GM12878 (cell line): ENCODE measurements at regions of chr6 and their contacts with region 1.

Region 1: DNA sequence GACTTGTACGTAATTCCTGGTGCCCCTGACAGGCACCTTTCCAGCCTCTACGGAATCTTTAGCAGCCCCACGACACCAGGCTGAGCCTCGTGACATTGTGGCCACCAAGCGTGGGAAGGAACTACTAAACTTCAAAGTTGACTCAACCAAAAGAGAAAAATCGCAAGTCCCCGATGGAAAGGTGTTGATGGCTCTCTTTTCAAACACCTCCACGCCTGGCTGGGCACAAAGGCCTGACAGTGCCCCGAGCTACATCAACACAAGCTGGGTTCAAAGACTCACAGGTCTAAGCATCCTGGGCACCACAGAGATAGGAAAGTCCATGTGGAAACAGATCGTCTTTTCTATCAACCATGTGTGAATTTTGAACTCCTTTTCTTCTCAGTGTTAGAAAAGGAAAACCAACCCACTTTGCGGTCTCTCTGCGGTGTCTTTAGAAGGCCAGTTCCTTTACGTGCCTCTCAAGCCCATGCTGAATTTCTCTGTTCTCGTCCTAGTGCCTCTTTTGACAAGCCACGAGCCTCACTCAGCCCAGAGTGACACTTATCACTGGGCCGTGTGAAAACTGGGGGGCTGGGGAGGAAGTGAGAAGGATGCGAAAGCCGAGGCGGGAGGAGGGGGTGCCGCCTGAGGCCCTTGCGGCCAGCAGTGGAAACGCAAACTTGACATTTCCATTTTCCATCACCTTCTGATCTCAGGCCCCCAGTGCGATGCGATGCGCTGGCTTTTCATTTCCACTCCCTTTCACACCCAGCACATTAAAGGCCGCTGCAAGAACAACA is 59.4 kb downstream of the GFOD1 start:
- DNase-seq: peak; percentile 98
- ATAC-seq: peak; percentile 73
- H3K4me3 ChIP-seq: peak overlapping the region; percentile 22; the same call in 1 of the 2 replicates
- H3K27ac ChIP-seq: peak overlapping the region; percentile 99
- H3K4me1 ChIP-seq: peaks cover 76% of the 10 kb centered on the region
- H3K27me3 ChIP-seq: no peaks in the 10 kb centered on the region
- CTCF ChIP-seq: peak; percentile 38 to 68 (median 41); a peak in 5 of 6 replicates
- EP300 ChIP-seq: peak; percentile 79 to 91
- POLR2A ChIP-seq: peak; percentile 60
- RAD21 ChIP-seq: peak; percentile 57

Region 2: GRCh38 chr6:13336553-13336952 is 91.4 kb before region 1 on chr6:
- CTCF ChIA-PET with region 1: interaction called, 18 read pairs
- POLR2A ChIA-PET with region 1: interaction called, 3 read pairs
- RAD21 ChIA-PET with region 1: interaction called, 52 read pairs
- SMC1A ChIA-PET with region 1: interaction called, 56 read pairs
- in situ Hi-C with region 1: no loop called
- intact Hi-C with region 1: loop called (anchors 1 kb)
- DNase-seq: no peak
- ATAC-seq: peak; percentile 82
- H3K4me3 ChIP-seq: no peak overlapping the region
- H3K27ac ChIP-seq: no peak overlapping the region
- H3K4me1 ChIP-seq: peaks cover 15% of the 10 kb centered on the region; the same call in 1 of the 2 replicates
- H3K27me3 ChIP-seq: no peaks in the 10 kb centered on the region
- CTCF ChIP-seq: peak; percentile 90 to 95 (median 94); a peak in 5 of 6 replicates
- EP300 ChIP-seq: no peak
- POLR2A ChIP-seq: no peak
- RAD21 ChIP-seq: peak; percentile 98

Region 3: DNA sequence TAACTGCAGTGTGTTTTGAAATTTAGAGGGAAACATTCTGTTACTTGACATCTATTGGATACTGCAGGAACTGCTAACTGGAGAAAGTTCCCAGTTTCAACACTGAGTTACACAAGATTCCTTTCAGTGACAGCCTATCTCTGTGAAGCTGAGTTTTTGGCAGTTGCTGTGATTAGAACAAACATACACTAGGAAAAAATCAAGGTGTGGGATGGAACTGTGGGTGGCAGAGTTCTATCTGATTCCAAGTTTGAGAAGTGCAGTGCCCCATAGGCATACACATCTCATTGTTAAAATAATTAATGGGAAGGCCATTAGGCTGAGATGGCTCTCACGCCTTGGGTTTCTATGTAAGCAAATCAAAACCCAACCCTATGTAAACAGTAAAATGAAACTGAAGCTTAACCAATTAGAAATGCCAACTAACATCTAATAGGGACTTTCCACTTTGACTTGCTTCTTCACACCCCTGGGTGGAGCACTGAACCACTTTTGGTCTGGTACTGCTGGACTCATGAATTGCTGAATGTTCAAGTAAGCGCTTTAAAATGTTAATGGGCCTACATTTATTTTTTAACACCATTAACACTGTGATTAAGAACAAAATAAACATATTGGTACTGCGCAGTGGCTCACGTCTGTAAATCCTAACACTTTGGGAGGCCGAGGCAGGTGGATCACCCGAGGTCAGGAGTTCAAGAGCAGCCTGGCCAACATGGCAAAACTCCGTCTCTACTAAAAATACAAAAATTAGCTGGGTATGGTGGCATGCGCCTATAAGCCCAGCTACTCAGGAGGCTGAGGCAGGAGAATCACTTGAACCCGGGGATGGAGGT is 44.4 kb before region 1 on chr6:
- CTCF ChIA-PET with region 1: interaction called, 113 read pairs
- POLR2A ChIA-PET with region 1: interaction called, 55 read pairs
- RAD21 ChIA-PET with region 1: interaction called, 106 read pairs
- SMC1A ChIA-PET with region 1: interaction called, 241 read pairs
- in situ Hi-C with region 1: loop called (anchors 5 kb)
- intact Hi-C with region 1: loop called (anchors 2 kb)
- DNase-seq: peak; percentile 91
- ATAC-seq: peak; percentile 98
- H3K4me3 ChIP-seq: no peak overlapping the region
- H3K27ac ChIP-seq: peak overlapping the region; percentile 93
- H3K4me1 ChIP-seq: peaks cover 45% of the 10 kb centered on the region
- H3K27me3 ChIP-seq: no peaks in the 10 kb centered on the region
- CTCF ChIP-seq: peak; percentile 40 to 67 (median 48); a peak in 5 of 6 replicates
- EP300 ChIP-seq: peak in 1 of 2 experiments; percentile 54; a peak in 2 of 4 replicates
- POLR2A ChIP-seq: no peak
- RAD21 ChIP-seq: peak; percentile 83

Region 4: DNA sequence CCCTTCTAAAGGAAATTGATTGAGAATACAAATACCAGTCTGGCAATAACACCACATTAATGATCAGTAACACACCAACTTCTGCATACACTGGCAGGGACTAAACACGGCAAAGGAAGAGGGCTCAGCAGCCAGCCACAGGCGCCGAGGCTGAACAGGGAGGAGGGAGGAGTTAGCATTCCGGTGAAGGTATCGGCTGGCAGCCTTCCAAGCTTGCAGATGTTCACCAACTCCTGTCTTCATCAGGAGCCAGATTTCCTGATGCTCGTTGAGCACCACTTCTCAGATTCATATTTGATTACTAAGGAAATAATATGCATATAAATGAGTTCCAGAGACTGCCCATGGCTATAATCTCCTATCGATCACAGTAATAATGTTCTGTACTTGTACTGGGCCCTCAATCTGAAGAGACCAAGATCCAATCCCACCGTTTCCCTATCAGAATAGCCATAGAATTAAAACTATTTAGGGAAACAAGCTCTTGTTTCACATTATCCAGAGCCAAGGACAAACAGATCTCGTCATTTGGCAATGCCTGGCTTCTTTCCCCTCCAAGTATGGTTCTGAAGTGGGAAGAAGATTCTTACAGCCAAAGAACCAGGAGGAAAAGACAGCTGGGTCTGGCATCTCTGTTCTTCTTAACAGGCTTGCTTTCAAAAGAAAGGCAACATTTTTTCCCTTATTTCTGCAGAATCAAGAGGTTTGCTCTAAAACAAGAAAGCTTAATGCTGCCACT is 17.2 kb after region 1 on chr6:
- CTCF ChIA-PET with region 1: interaction called, 10 read pairs
- POLR2A ChIA-PET with region 1: interaction called, 5 read pairs
- RAD21 ChIA-PET with region 1: interaction called, 11 read pairs
- SMC1A ChIA-PET with region 1: interaction called, 56 read pairs
- in situ Hi-C with region 1: no loop called
- intact Hi-C with region 1: no loop called
- DNase-seq: no peak
- ATAC-seq: peak; percentile 76
- H3K4me3 ChIP-seq: no peak overlapping the region
- H3K27ac ChIP-seq: no peak overlapping the region
- H3K4me1 ChIP-seq: peaks cover 14% of the 10 kb centered on the region
- H3K27me3 ChIP-seq: no peaks in the 10 kb centered on the region
- CTCF ChIP-seq: no peak
- EP300 ChIP-seq: no peak
- POLR2A ChIP-seq: no peak
- RAD21 ChIP-seq: no peak

Region 5: DNA sequence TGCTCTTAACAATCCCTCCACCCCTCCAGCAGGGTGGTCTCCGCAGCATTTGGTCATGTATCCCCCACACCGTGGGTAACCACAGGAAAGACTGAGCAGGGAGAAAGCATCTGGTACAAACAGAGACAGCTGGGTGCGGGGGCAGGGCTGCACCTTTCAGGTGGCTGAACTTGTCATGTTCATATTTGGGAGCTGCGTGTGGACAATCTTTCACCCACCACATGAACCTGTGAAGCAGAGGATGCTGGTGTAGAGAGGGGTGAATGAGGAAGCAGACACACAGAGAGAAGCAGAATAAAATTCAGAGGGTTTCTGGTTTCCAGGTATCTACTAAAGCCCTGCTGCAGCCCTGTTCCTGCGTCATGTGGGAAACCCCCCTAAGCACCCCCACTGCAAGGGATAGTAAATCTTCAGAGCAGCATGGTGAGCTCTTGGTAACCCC is 50.6 kb after region 1 on chr6:
- CTCF ChIA-PET with region 1: interaction called, 44 read pairs
- POLR2A ChIA-PET with region 1: interaction called, 68 read pairs
- RAD21 ChIA-PET with region 1: interaction called, 193 read pairs
- SMC1A ChIA-PET with region 1: interaction called, 181 read pairs
- in situ Hi-C with region 1: no loop called
- intact Hi-C with region 1: no loop called
- DNase-seq: no peak
- ATAC-seq: peak; percentile 56
- H3K4me3 ChIP-seq: 0 out of 2 replicates have a peak overlapping the region, but pooled peaks have one; percentile 1
- H3K27ac ChIP-seq: peak overlapping the region; percentile 63
- H3K4me1 ChIP-seq: peaks cover 48% of the 10 kb centered on the region
- H3K27me3 ChIP-seq: no peaks in the 10 kb centered on the region
- CTCF ChIP-seq: no peak
- EP300 ChIP-seq: no peak
- POLR2A ChIP-seq: no peak
- RAD21 ChIP-seq: no peak

Region 6: GRCh38 chr6:13574149-13574570 is 146.2 kb after region 1 on chr6:
- CTCF ChIA-PET with region 1: interaction called, 16 read pairs
- POLR2A ChIA-PET with region 1: interaction called, 8 read pairs
- RAD21 ChIA-PET with region 1: interaction called, 22 read pairs
- SMC1A ChIA-PET with region 1: interaction called, 16 read pairs
- in situ Hi-C with region 1: no loop called
- intact Hi-C with region 1: loop called (anchors 2 kb)
- DNase-seq: peak; percentile 82
- ATAC-seq: peak; percentile 89
- H3K4me3 ChIP-seq: peak overlapping the region; percentile 93
- H3K27ac ChIP-seq: peak overlapping the region; percentile 96
- H3K4me1 ChIP-seq: peaks cover 4% of the 10 kb centered on the region
- H3K27me3 ChIP-seq: no peaks in the 10 kb centered on the region
- CTCF ChIP-seq: peak; percentile 41 to 63 (median 50); a peak in 4 of 6 replicates
- EP300 ChIP-seq: peak in 1 of 2 experiments; percentile 45; a peak in 1 of 4 replicates
- POLR2A ChIP-seq: peak; percentile 72; the same call in 1 of the 2 replicates
- RAD21 ChIP-seq: peak; percentile 46; the same call in 1 of the 2 replicates